H1 (cell line): ENCODE measurements at regions of chr4 and their contacts with region 1.

Region 1: DNA sequence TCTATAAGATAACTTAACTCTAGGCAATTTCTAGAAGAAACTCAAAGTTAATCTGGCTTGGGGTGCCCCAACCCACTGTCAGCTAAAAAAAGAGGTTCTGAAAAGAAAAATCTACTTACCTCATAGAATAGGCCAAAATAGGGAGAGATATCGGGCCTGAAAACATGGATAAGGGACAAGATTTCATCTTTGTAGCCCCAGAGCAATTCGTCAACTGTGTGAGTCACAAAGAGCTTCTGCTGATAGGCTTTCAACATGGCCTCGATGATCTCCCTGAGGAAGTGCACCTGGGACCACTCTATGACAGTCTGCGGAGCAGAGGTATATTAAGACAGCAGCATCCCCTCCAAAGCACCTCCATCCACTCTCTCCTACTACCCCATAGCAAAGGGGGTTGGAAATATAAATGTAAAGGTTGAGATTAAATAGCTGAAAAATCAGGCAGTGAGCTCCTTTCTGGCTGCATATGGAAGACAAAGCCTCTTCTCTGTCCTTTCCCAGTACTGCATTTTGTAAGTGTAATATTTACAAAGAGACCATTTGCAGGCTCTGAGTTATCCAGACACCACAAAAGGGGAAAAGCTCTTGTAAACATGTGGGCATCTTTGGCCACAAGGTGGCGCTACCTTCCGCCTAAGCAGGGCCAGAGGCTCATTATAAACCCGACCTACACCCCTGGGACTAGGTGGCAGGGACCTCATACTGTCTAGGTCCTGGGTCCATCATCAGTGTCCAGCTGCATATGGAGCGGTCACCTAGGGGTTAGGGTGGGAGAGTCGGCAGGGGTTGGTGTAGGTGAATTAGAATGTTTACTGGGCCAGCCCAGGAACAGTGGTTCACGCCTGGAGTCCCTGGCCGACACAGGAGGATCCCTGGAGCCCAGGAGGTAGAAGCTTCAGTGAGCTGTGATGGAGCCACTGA is 31.5 kb upstream of the NUP54 start:
- DNase-seq: peak; percentile 59 to 93
- H3K4me3 ChIP-seq: no peak overlapping the region
- H3K27ac ChIP-seq: no peak overlapping the region
- H3K4me1 ChIP-seq: no peaks in the 10 kb centered on the region
- H3K27me3 ChIP-seq: no peaks in the 10 kb centered on the region
- CTCF ChIP-seq: peak; percentile 77 to 87 (median 86)
- EP300 ChIP-seq: no peak
- POLR2A ChIP-seq: no peak
- RAD21 ChIP-seq: peak; percentile 95

Region 2: DNA sequence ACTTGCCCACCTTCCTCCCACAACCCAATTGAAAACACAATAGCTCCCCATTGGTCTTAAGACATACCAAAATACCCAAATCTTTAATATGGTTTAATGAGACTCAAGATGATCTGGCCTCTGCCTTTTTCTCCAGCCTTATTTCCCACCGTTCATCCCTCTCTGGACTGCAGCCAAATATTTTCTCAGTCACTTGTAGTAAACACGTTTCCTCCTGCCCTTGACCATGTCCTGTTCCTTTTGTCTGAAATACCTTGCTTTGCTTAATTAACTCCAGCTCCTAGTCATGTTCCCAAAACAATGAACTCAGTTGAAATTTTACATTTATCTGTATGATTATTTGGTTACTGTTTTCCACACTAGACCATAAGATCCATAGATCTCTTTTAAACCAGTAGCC is 23.0 kb before region 1 on chr4:
- CTCF ChIA-PET with region 1: interaction called, 12 read pairs
- POLR2A ChIA-PET with region 1: no interaction called
- DNase-seq: no peak
- H3K4me3 ChIP-seq: no peak overlapping the region
- H3K27ac ChIP-seq: no peak overlapping the region
- H3K4me1 ChIP-seq: no peaks in the 10 kb centered on the region
- H3K27me3 ChIP-seq: no peaks in the 10 kb centered on the region
- CTCF ChIP-seq: no peak
- EP300 ChIP-seq: no peak
- POLR2A ChIP-seq: no peak
- RAD21 ChIP-seq: no peak

Region 3: GRCh38 chr4:76198411-76199237 is 19.0 kb after region 1 on chr4:
- CTCF ChIA-PET with region 1: interaction called, 26 read pairs
- POLR2A ChIA-PET with region 1: interaction called, 3 read pairs
- DNase-seq: no peak
- H3K4me3 ChIP-seq: no peak overlapping the region
- H3K27ac ChIP-seq: no peak overlapping the region
- H3K4me1 ChIP-seq: peaks cover 0 to 5% (median 0%) of the 10 kb centered on the region in 4 experiments; a peak in 1 of 7 replicates
- H3K27me3 ChIP-seq: no peaks in the 10 kb centered on the region
- CTCF ChIP-seq: no peak
- EP300 ChIP-seq: no peak
- POLR2A ChIP-seq: no peak
- RAD21 ChIP-seq: no peak

Region 4: GRCh38 chr4:76213415-76214176 is 33.9 kb after region 1 on chr4 and contains the start of gene SCARB2:
- CTCF ChIA-PET with region 1: interaction called, 15 read pairs
- POLR2A ChIA-PET with region 1: interaction called, 3 read pairs
- DNase-seq: peak in 1 of 2 experiments; percentile 91
- H3K4me3 ChIP-seq: peak within 1 kb of the TSS; percentile 52 to 86 (median 68)
- H3K27ac ChIP-seq: peak within 1 kb of the TSS; percentile 54
- H3K4me1 ChIP-seq: peaks cover 4 to 22% (median 9%) of the 10 kb centered on the region in 4 experiments
- H3K27me3 ChIP-seq: peaks cover 0 to 2% (median 0%) of the 10 kb centered on the region in 4 experiments; a peak in 1 of 7 replicates
- CTCF ChIP-seq: no peak
- EP300 ChIP-seq: no peak
- POLR2A ChIP-seq: peak; percentile 66 to 72; a peak in 2 of 3 replicates
- RAD21 ChIP-seq: 0 out of 4 replicates have a peak, but pooled peaks of 1 of the 2 experiments have one; percentile 0
- total RNA-seq, gene SCARB2: 35.7 and 40.2 TPM in 2 replicates

Region 5: GRCh38 chr4:76270244-76271175 is 90.9 kb after region 1 on chr4:
- CTCF ChIA-PET with region 1: interaction called, 15 read pairs
- POLR2A ChIA-PET with region 1: no interaction called
- DNase-seq: no peak
- H3K4me3 ChIP-seq: no peak overlapping the region
- H3K27ac ChIP-seq: no peak overlapping the region
- H3K4me1 ChIP-seq: no peaks in the 10 kb centered on the region
- H3K27me3 ChIP-seq: peaks cover 0 to 2% (median 0%) of the 10 kb centered on the region in 4 experiments; a peak in 1 of 7 replicates
- CTCF ChIP-seq: no peak
- EP300 ChIP-seq: no peak
- POLR2A ChIP-seq: no peak
- RAD21 ChIP-seq: no peak

Region 6: GRCh38 chr4:76341063-76341462 is 161.4 kb after region 1 on chr4:
- CTCF ChIA-PET with region 1: interaction called, 11 read pairs
- POLR2A ChIA-PET with region 1: no interaction called
- DNase-seq: no peak
- H3K4me3 ChIP-seq: no peak overlapping the region
- H3K27ac ChIP-seq: no peak overlapping the region
- H3K4me1 ChIP-seq: no peaks in the 10 kb centered on the region
- H3K27me3 ChIP-seq: no peaks in the 10 kb centered on the region
- CTCF ChIP-seq: no peak
- EP300 ChIP-seq: no peak
- POLR2A ChIP-seq: no peak
- RAD21 ChIP-seq: no peak

Region 7: DNA sequence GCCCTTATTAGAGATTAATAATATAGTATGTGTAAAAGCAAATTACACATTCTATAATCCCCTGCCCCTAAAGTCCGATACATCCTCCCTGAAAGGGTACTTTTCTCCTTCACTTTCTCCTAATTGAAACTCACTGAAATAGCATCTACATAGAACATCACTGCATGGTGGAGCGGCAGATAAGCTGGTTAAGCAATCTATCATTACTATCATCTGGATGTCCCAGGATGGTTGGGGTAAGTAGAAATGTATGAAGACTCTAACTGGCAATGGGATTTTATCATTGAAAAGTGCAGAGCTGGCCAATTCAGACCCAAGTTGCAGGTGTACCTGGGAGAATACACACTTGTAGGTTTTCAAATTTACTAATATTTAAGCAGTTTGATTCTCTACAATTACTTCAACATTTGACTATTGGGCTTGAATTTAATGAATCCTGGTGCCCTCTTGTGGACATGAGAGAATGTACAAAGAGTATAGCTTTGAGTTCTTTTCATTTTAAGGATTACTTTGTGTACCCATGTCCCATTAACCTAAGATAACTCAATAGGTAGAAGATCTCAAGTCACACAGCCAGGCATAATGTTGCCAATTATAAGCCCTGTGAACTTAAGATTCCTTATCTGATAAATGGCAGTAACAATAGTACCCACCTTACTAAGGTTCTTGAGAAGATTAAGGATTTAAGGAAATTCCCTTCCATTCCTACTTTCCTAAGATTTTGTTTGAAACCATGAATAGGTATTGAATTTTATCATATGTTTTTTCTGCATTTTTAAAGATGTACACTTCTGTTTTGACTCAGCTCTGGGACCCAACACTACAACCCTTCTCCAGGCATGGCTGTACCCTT is 325.2 kb after region 1 on chr4:
- CTCF ChIA-PET with region 1: interaction called, 14 read pairs
- POLR2A ChIA-PET with region 1: no interaction called
- DNase-seq: no peak
- H3K4me3 ChIP-seq: no peak overlapping the region
- H3K27ac ChIP-seq: no peak overlapping the region
- H3K4me1 ChIP-seq: no peaks in the 10 kb centered on the region
- H3K27me3 ChIP-seq: no peaks in the 10 kb centered on the region
- CTCF ChIP-seq: peak in 2 of 3 experiments; percentile 38 to 57; a peak in 2 of 4 replicates
- EP300 ChIP-seq: no peak
- POLR2A ChIP-seq: no peak
- RAD21 ChIP-seq: peak; percentile 70 to 73